ENCODE measurements at regions of chr5 and their contacts with region 1.

Region 1: GRCh38 chr5:164504141-164504772 is 998.8 kb downstream of the MAT2B start:
- DNase-seq: no peak
- H3K4me3 Mint-ChIP-seq: no peak overlapping the region
- H3K27ac Mint-ChIP-seq: no peak overlapping the region
- H3K4me1 Mint-ChIP-seq: no peaks in the 10 kb centered on the region
- H3K27me3 Mint-ChIP-seq: no peaks in the 10 kb centered on the region

Region 2: GRCh38 chr5:163695830-163696578 is 808.3 kb before region 1 on chr5:
- intact Hi-C with region 1: loop called (anchors 10 kb)
- DNase-seq: no peak
- H3K4me3 Mint-ChIP-seq: no peak overlapping the region
- H3K27ac Mint-ChIP-seq: no peak overlapping the region
- H3K4me1 Mint-ChIP-seq: no peaks in the 10 kb centered on the region
- H3K27me3 Mint-ChIP-seq: no peaks in the 10 kb centered on the region

Region 3: GRCh38 chr5:164617290-164617689 is 113.0 kb after region 1 on chr5:
- intact Hi-C with region 1: no loop called
- DNase-seq: no peak
- H3K4me3 Mint-ChIP-seq: no peak overlapping the region
- H3K27ac Mint-ChIP-seq: no peak overlapping the region
- H3K4me1 Mint-ChIP-seq: no peaks in the 10 kb centered on the region
- H3K27me3 Mint-ChIP-seq: no peaks in the 10 kb centered on the region